Heart right ventricle (tissue), 16 donors: ENCODE measurements at regions of chr12 and their contacts with region 1.

Region 1: DNA sequence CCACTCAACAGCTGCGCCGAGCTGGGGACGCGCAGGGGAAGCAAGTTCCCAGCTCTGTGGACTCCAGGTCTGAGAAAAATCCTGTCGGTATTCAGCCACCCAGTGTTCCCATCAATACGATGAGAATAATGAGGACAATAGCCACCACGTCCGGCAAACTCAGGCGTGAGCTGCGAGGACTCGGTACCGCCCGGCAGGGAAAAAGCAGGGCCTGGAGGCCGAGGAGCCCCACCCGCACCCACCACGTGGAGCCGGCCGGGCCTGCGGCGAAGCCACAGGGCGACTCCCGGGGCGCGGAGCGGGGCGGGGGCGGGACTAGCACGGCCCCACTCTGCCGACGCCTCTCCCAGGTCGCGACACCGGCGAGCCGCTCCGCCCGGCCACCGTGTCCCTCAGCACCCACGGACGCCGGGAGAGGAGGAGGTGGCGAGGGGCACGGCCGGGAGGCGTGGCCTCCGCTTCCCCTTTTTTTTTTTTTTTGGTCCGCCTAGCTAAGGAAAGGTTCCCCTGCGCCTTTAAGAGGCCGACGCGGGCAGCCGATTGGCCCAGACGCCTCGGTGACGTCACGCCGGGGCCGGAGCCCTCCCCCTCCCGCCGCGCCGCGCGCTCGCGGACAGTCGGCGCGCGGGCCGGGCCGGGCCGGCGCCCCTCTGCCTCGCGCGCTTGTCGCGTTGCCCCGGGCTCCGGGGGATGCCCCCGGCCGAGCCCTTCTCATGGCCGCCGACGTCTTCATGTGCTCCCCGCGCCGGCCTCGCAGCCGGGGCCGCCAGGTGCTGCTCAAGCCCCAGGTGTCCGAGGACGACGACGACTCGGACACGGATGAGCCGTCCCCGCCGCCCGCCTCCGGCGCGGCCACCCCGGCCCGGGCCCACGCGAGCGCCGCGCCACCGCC is at the start of gene MLXIP:
- DNase-seq: peak; percentile 93 to 95
- ATAC-seq: peak; percentile 85 to 95 (median 90)
- H3K4me3 ChIP-seq: peak within 1 kb of the TSS; percentile 48 to 89 (median 76)
- H3K27ac ChIP-seq: peak within 1 kb of the TSS; percentile 82 to 93 (median 88)
- H3K4me1 ChIP-seq: peaks cover 9 to 54% (median 48%) of the 10 kb centered on the region in 9 donors
- H3K27me3 ChIP-seq: no peaks in the 10 kb centered on the region
- CTCF ChIP-seq: no peak
- total RNA-seq, gene MLXIP: 17.3 to 37.9 (median 20.9) TPM

Region 2: GRCh38 chr12:122097927-122098756 is 19.8 kb after region 1 on chr12:
- intact Hi-C with region 1: loop called in 2 of 10 experiments (anchors 2 kb)
- DNase-seq: peak; percentile 69 to 73
- ATAC-seq: peak; percentile 86 to 93 (median 91)
- H3K4me3 ChIP-seq: peak overlapping the region in 4 of 10 donors; percentile 1 to 25 (median 16)
- H3K27ac ChIP-seq: peak overlapping the region; percentile 61 to 91 (median 83)
- H3K4me1 ChIP-seq: peaks cover 16 to 91% (median 70%) of the 10 kb centered on the region in 9 donors
- H3K27me3 ChIP-seq: no peaks in the 10 kb centered on the region
- CTCF ChIP-seq: no peak

Region 3: GRCh38 chr12:122111089-122111641 is 32.8 kb after region 1 on chr12:
- intact Hi-C with region 1: loop called in 1 of 10 experiments (anchors 5 kb)
- DNase-seq: no peak
- ATAC-seq: no peak
- H3K4me3 ChIP-seq: no peak overlapping the region
- H3K27ac ChIP-seq: no peak overlapping the region
- H3K4me1 ChIP-seq: peaks cover 2 to 61% (median 43%) of the 10 kb centered on the region in 9 donors
- H3K27me3 ChIP-seq: no peaks in the 10 kb centered on the region
- CTCF ChIP-seq: no peak